GM18951 (cell line): ENCODE measurements at regions of chr22 and their contacts with region 1.

Region 1: GRCh38 chr22:41966607-41967240 is 2.5 kb upstream of the SEPTIN3 start:
- POLR2A ChIP-seq: no peak

Region 2: GRCh38 chr22:41387341-41387740 is 579.4 kb before region 1 on chr22:
- in situ Hi-C with region 1: no loop called
- POLR2A ChIP-seq: no peak

Region 3: GRCh38 chr22:42090596-42091454 is 124.1 kb after region 1 on chr22 and contains the start of gene NDUFA6:
- in situ Hi-C with region 1: loop called (anchors 25 kb)
- POLR2A ChIP-seq: peak; percentile 89

Region 4: DNA sequence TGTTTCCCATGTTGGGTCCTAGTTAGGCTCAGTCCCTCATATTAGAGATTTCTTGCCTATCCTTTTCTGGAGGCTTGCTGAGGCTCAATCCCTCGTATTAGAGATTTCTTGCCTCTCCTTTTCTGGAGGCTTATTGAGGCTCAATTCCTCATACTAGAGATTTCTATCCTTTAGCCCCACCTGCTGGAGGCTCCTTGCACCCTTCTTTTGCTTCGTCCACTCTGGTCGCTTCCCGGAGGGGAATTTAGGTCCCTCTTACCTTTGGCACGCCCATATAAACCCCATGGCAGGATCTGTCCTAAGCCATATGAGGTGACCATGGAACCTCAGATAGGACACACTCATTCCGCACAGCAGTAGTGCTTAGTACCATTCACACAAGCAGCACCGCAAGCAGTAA is 148.0 kb after region 1 on chr22:
- in situ Hi-C with region 1: no loop called
- POLR2A ChIP-seq: no peak

Region 5: DNA sequence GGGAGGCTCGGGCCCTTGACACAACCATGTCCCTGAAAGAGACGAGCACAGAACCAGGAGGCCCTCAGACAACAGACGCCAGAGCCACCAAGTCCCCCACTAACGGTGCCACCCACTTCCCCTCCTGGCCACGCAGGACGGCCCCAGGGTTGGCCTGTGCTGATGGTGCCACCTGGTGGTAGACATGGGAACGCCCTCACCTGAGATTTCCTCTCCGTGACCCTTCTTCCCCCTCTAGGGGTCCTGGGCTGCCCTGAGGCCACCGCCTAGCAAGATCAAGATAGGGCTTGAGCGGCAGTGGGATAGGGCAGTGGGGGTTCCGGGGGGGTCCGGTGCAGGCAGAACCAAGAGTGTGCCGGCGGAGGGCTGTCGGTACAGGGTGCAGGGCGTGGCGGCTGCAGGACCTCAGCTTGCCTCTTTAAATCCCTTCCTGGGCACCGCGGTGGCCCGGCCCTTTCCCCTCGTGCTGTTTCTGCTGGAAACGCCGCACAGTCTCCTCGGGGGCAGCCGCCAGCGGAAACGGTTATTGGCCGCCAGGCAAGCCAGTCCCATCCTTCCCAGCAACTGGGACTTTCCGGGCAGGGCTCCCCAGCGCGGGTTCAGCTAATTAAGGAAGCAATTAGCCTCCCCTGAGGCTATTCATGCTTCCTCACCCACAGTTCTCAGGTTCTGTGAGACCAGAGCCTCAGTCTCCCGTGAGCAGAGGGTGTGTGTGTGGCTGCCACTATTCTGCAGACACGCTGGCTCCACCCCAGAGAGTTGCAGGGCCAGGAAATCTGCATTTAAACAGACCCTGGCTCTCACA is 471.0 kb after region 1 on chr22:
- in situ Hi-C with region 1: loop called (anchors 10 kb)
- POLR2A ChIP-seq: peak; percentile 50

Region 6: DNA sequence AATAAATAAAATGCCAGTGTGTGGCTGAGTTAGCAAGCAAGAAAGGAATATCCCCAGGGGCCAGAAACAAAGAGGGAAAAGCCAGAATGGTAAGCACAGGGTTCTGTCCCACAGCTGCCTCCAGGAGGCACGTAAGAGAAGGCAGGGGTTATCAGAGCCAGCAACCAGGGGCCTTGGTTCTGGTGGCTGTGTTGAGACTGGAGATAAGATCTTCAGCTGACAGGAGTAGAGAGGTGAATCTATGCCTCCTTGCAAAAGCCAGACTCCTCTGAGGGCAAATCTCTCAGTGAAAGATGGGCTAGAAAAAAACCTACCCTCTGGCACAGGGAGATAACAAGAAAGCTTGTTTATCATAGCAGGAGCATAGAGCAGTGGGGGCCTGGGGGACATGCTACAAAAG is 495.3 kb after region 1 on chr22:
- in situ Hi-C with region 1: no loop called
- POLR2A ChIP-seq: no peak